HCT116 (cell line): ENCODE measurements at regions of chr1 and their contacts with region 1.

Region 1: GRCh38 chr1:70134148-70134547 is 71.2 kb downstream of the LRRC40 start:
- DNase-seq: no peak
- ATAC-seq: no peak
- H3K4me3 ChIP-seq: no peak overlapping the region
- H3K27ac ChIP-seq: no peak overlapping the region
- H3K4me1 ChIP-seq: peaks cover 3 to 12% of the 10 kb centered on the region in 2 experiments; a peak in 3 of 4 replicates
- H3K27me3 ChIP-seq: no peaks in the 10 kb centered on the region
- CTCF ChIP-seq: no peak
- POLR2A ChIP-seq: no peak
- RAD21 ChIP-seq: no peak

Region 2: GRCh38 chr1:69661686-69662085 is 472.5 kb before region 1 on chr1:
- CTCF ChIA-PET with region 1: no interaction called
- POLR2A ChIA-PET with region 1: no interaction called
- RAD21 ChIA-PET with region 1: no interaction called
- intact Hi-C with region 1: no loop called
- DNase-seq: no peak
- ATAC-seq: no peak
- H3K4me3 ChIP-seq: no peak overlapping the region
- H3K27ac ChIP-seq: no peak overlapping the region
- H3K4me1 ChIP-seq: no peaks in the 10 kb centered on the region
- H3K27me3 ChIP-seq: peaks cover 18% of the 10 kb centered on the region
- CTCF ChIP-seq: no peak
- POLR2A ChIP-seq: no peak
- RAD21 ChIP-seq: no peak

Region 3: GRCh38 chr1:70487910-70488665 is 353.9 kb after region 1 on chr1:
- CTCF ChIA-PET with region 1: no interaction called
- POLR2A ChIA-PET with region 1: no interaction called
- RAD21 ChIA-PET with region 1: no interaction called
- intact Hi-C with region 1: loop called (anchors 1 kb)
- DNase-seq: peak; percentile 46
- ATAC-seq: peak; percentile 93
- H3K4me3 ChIP-seq: no peak overlapping the region
- H3K27ac ChIP-seq: no peak overlapping the region
- H3K4me1 ChIP-seq: peaks cover 0 to 7% of the 10 kb centered on the region in 2 experiments; a peak in 1 of 4 replicates
- H3K27me3 ChIP-seq: no peaks in the 10 kb centered on the region
- CTCF ChIP-seq: peak; percentile 72 to 88 (median 88)
- POLR2A ChIP-seq: no peak
- RAD21 ChIP-seq: peak; percentile 93

Region 4: GRCh38 chr1:70509996-70510876 is 376.1 kb after region 1 on chr1:
- CTCF ChIA-PET with region 1: no interaction called
- POLR2A ChIA-PET with region 1: no interaction called
- RAD21 ChIA-PET with region 1: no interaction called
- intact Hi-C with region 1: loop called (anchors 1 kb)
- DNase-seq: peak; percentile 59
- ATAC-seq: peak; percentile 90
- H3K4me3 ChIP-seq: no peak overlapping the region
- H3K27ac ChIP-seq: no peak overlapping the region
- H3K4me1 ChIP-seq: no peaks in the 10 kb centered on the region
- H3K27me3 ChIP-seq: no peaks in the 10 kb centered on the region; the same call in 1 of the 2 replicates
- CTCF ChIP-seq: peak; percentile 44 to 71 (median 65); a peak in 5 of 6 replicates
- POLR2A ChIP-seq: no peak
- RAD21 ChIP-seq: peak; percentile 84